Posterior cingulate gyrus (tissue), 11 donors: ENCODE measurements at regions of chr20 and their contacts with region 1.

Region 1: DNA sequence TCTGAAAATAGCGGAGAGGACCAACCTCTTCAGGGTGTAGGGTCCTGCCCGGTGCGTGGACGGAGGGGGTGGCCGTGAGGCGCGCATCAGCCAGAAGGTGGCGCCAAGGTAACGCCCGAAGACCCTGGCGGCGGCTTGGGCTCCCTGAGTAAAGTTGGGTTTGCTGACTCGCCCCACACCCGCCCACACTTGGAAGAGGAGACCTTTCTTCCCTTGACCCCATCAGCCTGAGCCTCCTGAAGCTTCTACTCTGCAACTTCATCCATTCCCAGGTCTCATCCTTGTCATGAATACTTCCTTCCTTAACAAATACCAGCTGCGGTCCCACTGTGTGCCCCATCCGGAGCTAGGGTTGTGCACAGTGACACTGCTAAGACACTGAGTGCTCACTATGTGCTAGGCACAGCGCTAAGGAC is 14.6 kb downstream of the CD40 start:
- DNase-seq: peak; percentile 50 to 96 (median 74)

Region 2: DNA sequence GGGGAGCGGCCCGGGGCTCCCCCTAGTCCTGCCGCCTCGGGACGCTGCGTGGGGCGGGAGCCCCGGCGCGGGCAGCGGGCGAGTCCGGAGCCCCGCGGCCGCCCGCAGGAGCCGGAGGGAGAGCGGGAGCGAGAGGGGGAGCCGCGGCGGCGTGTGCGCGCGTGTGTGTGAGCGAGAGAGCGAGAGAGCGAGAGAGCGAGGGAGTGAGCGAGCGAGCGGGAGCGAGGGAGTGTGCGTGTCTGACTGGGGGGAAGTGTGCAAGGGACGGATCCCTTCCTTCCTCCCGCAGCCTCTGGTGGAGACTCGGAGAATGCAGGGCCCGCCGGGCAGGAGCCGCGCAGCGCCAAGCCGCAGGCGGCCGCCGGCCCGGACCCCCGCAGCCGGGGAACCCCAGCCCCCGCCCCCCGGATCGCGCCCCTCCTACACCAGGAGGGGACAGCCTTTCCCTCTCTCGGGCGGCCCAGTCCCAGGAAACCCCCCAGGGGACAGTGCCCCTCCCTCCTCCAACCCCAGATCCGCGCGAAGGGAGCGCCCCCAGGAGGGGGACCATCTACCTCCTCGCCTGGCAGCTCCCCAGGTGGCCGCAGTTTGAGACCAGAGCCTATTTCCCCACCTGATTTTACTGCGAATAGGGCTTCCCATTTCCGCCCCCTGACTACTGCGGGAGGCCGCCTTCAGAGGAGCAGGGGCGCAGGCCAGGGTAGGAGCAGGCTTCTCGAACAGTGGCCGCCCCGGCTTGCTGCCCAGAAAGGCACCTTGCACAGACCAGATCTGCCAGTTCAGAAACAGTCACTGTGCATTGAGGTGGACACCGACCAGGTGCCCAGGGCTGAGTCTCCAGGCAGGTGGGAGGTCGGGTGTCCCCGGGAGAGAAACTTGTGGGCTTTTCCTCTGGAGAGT is 175.8 kb after region 1 on chr20 and contains the start of gene CDH22:
- intact Hi-C with region 1: loop called (anchors 2 kb)
- DNase-seq: peak; percentile 51 to 94 (median 70)